ENCODE measurements at regions of chr14 and their contacts with region 1.

Region 1: DNA sequence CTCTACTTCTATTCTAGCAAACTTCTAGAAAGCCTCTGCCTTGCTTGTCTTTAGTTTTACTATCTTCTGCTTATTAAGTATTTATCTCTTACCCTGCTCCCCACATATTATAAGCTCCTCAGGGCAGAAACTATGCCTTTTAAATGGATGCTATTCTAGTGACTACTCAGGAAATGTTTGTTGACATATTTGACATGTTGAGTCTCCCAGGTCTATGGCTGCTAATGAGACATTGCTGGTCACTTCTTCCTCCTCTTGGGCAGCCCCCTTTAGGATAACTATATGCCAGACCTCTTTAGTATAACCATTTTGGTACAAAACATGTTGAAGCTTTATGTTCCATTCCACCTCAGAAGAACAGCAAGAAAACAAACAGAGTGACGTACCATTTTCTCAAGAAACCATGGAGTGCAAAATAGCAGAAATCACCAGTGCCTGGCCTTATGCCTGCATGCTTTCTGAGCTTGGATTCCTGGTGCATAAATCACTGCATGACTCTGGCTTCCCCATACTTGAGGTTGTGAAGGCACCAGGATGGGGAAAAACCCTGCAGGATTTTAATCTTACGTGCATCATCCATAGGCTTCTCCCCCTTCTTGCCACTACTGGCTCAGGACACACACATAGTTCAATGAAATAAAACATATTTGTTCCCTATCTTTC is 202.6 kb downstream of the TMX1 start:
- DNase-seq: peak in 1 of 2 donors; percentile 75
- H3K4me3 ChIP-seq: no peak overlapping the region
- H3K27ac ChIP-seq: peak overlapping the region; percentile 27 to 49
- H3K4me1 ChIP-seq: peaks cover 0 to 9% of the 10 kb centered on the region in 2 donors
- H3K27me3 ChIP-seq: no peaks in the 10 kb centered on the region
- CTCF ChIP-seq: no peak

Region 2: GRCh38 chr14:51401278-51401677 is 41.4 kb before region 1 on chr14:
- intact Hi-C with region 1: loop called (anchors 5 kb)
- DNase-seq: no peak
- H3K4me3 ChIP-seq: no peak overlapping the region
- H3K27ac ChIP-seq: peak overlapping the region; percentile 14 to 65
- H3K4me1 ChIP-seq: peaks cover 3 to 8% of the 10 kb centered on the region in 2 donors
- H3K27me3 ChIP-seq: no peaks in the 10 kb centered on the region
- CTCF ChIP-seq: no peak

Region 3: GRCh38 chr14:52175982-52176502 is 733.4 kb after region 1 on chr14:
- intact Hi-C with region 1: no loop called
- DNase-seq: no peak
- H3K4me3 ChIP-seq: no peak overlapping the region
- H3K27ac ChIP-seq: no peak overlapping the region
- H3K4me1 ChIP-seq: no peaks in the 10 kb centered on the region
- H3K27me3 ChIP-seq: no peaks in the 10 kb centered on the region
- CTCF ChIP-seq: no peak